AG04450 (cell line): ENCODE measurements at regions of chr3 and their contacts with region 1.

Region 1: GRCh38 chr3:65979162-65979561 is 59.6 kb downstream of the MAGI1 start:
- DNase-seq: peak; percentile 67
- H3K4me3 ChIP-seq: no peak overlapping the region
- H3K27ac ChIP-seq: peak overlapping the region; percentile 68
- H3K27me3 ChIP-seq: no peaks in the 10 kb centered on the region
- CTCF ChIP-seq: no peak

Region 2: DNA sequence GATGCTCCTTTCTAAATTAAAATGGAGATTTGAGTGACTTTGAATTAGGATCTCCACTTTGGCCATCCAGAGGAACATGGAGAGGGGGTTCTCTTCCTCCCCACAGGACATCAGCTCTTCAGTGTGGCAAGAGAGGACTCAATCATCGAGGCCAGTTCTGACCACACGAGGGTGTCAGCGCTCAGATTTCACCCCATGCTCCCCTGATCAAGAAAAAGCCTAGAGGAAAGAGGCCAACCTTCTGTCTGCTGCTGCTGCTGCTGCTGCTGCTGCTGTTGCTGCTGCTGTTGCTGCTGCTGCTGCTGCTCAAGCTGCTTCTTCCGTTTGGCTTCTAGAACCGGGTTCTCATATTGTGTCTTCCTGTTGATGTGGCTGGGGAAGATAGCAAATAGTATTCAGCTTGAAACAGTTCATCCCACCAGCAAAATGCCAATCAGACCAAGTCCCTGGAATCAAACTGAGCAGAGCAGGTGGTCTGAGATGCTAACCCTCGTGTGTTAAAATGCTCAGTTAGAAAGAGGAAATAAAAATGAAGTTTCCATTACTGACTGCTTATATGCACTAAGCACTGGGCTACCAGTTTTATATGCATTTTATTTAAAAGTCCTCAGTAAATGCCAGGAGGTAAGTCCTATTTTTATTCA is 539.4 kb before region 1 on chr3:
- CTCF ChIA-PET with region 1: no interaction called
- POLR2A ChIA-PET with region 1: no interaction called
- DNase-seq: peak; percentile 49
- H3K4me3 ChIP-seq: no peak overlapping the region
- H3K27ac ChIP-seq: no peak overlapping the region
- H3K27me3 ChIP-seq: no peaks in the 10 kb centered on the region
- CTCF ChIP-seq: peak; percentile 81

Region 3: DNA sequence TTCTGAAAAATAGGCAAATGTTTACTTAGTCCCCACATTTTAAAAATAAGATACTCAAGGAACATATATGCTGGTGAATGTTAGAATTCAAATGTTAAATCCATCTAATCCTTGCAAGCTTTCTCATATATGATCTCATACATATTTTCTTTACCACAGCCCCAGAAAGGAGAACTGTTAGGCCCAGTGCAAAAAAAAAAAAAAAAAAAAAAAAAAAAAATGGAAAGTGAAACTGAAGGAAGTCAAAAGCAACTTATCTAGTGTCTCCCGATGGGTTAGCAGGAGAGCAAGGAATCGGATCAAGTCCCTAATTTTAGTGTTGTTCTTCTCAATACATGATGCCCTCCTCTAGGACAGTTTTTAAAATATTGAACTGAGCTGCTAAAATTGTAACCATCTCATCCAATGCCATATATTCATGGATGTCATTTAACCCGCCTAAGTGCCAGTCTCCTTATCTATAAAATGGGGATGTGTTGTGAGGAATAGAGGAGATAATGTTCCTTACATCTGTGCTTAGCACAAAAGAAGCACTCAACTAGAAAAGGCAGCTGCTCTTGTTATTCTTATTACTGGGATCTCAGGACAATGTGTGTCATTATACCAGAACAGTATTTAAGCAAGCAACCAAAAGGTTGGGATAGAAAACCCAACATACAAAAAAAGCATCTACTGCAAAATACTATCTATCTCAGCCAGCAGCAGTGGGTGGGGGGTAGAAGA is 220.1 kb before region 1 on chr3:
- CTCF ChIA-PET with region 1: no interaction called
- POLR2A ChIA-PET with region 1: interaction called, 16 read pairs
- DNase-seq: no peak
- H3K4me3 ChIP-seq: peak overlapping the region; percentile 43
- H3K27ac ChIP-seq: no peak overlapping the region
- H3K27me3 ChIP-seq: no peaks in the 10 kb centered on the region
- CTCF ChIP-seq: no peak

Region 4: GRCh38 chr3:66153481-66154443 is 174.6 kb after region 1 on chr3:
- CTCF ChIA-PET with region 1: no interaction called
- POLR2A ChIA-PET with region 1: interaction called, 11 read pairs
- DNase-seq: no peak
- H3K4me3 ChIP-seq: peak overlapping the region; percentile 55
- H3K27ac ChIP-seq: no peak overlapping the region
- H3K27me3 ChIP-seq: peaks cover under 1% of the 10 kb centered on the region
- CTCF ChIP-seq: no peak